ENCODE measurements at regions of chr19 and their contacts with region 1.

Region 1: DNA sequence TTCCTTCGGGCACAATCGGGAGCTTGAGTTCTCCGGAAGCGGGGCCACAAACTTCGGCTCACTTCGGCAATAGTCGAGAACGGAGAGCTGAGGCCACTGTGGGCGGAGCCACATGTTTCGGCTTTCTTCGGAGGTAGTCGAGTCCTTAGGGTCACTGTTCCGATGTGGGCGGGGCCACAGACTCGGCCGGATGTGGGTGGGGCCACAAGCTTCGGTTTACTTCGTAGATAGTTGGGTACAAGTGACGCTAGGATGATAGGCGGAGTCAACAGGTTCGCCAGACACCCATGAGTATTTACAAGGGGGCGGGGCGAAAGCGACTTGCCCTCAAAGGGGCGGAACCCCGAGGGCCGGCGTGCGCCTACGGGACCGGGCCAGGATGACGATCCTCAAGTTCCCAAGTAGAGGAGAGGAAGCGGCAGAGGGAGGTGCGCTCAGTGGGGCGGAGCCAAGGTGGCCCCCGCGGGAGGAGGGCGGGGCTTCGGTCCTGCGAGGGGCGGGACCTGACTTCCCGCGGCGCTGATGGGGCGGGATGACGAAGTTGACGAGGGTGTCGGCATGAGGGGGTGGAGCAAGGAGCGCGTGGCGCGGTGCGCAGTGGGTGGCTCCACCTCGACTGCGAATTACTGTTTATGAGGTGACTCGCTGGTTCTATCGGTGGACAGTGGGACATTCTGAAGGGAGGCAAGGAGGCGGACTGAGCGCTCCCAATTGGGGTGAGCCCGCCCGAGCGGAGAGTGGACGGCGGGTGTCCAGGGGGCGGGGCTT is 539 bp upstream of the MBOAT7 start:
- DNase-seq: peak; percentile 100
- H3K4me3 Mint-ChIP-seq: peak overlapping the region; percentile 94
- H3K27ac Mint-ChIP-seq: peak overlapping the region; percentile 100
- H3K4me1 Mint-ChIP-seq: peaks cover 31% of the 10 kb centered on the region
- H3K27me3 Mint-ChIP-seq: no peaks in the 10 kb centered on the region

Region 2: GRCh38 chr19:54102421-54103169 is 87.3 kb before region 1 on chr19 and contains the start of gene NDUFA3:
- intact Hi-C with region 1: loop called (anchors 1 kb)
- DNase-seq: peak; percentile 98
- H3K4me3 Mint-ChIP-seq: peak within 1 kb of the TSS; percentile 99
- H3K27ac Mint-ChIP-seq: peak within 1 kb of the TSS; percentile 87
- H3K4me1 Mint-ChIP-seq: peaks cover 17% of the 10 kb centered on the region
- H3K27me3 Mint-ChIP-seq: no peaks in the 10 kb centered on the region
- total RNA-seq, gene NDUFA3: 110 and 125 TPM in 2 replicates

Region 3: GRCh38 chr19:54159352-54160181 is 30.4 kb before region 1 on chr19 and contains the start of gene LENG1:
- intact Hi-C with region 1: loop called (anchors 1 kb)
- DNase-seq: peak; percentile 99
- H3K4me3 Mint-ChIP-seq: peak within 1 kb of the TSS; percentile 95
- H3K27ac Mint-ChIP-seq: peak within 1 kb of the TSS; percentile 99
- H3K4me1 Mint-ChIP-seq: peaks cover 56% of the 10 kb centered on the region
- H3K27me3 Mint-ChIP-seq: peaks cover 4% of the 10 kb centered on the region
- total RNA-seq, gene LENG1: 5.8 and 6.6 TPM in 2 replicates

Region 4: DNA sequence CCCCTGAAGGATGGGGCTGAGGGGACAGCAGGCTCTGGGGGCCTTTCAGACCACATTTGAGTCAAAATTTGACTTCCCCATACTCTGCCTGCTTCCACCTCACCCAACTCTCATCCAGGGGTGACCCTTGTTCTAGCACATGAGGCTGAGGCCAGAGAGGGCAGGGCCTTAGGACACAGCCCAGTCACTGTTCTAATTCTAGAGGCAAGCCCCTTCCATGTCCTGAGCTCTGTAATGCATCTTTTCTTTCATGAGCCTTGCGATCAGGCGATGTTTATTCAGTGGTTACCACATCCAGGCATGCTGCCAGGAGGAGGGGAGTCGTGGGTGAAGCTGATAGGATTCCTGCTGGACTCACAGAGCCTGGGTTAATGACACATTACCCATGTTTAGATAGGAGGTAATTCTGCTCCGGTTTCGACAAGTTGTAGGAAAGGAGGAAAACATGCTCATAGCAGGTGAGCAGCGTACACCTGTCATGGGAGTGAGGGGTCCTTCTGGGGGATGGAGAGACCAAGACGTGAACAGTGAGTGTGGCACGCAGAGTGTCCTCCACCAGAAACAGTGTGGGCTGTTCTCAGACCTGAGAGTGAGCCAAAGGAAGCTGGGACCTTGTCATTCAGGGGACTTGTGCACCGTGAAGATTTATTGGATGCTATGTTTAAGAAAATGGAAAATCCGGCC is 20.0 kb after region 1 on chr19:
- intact Hi-C with region 1: loop called (anchors 1 kb)
- DNase-seq: no peak
- H3K4me3 Mint-ChIP-seq: peak overlapping the region; percentile 3
- H3K27ac Mint-ChIP-seq: peak overlapping the region; percentile 79
- H3K4me1 Mint-ChIP-seq: peaks cover 61% of the 10 kb centered on the region
- H3K27me3 Mint-ChIP-seq: no peaks in the 10 kb centered on the region

Region 5: GRCh38 chr19:54463531-54464043 is 273.7 kb after region 1 on chr19 and contains the start of gene LENG9:
- intact Hi-C with region 1: loop called (anchors 1 kb)
- DNase-seq: peak; percentile 96
- H3K4me3 Mint-ChIP-seq: peak within 1 kb of the TSS; percentile 84
- H3K27ac Mint-ChIP-seq: peak within 1 kb of the TSS; percentile 89
- H3K4me1 Mint-ChIP-seq: peaks cover 25% of the 10 kb centered on the region
- H3K27me3 Mint-ChIP-seq: peaks cover 21% of the 10 kb centered on the region
- total RNA-seq, gene LENG9: 8.4 and 11.5 TPM in 2 replicates

Region 6: DNA sequence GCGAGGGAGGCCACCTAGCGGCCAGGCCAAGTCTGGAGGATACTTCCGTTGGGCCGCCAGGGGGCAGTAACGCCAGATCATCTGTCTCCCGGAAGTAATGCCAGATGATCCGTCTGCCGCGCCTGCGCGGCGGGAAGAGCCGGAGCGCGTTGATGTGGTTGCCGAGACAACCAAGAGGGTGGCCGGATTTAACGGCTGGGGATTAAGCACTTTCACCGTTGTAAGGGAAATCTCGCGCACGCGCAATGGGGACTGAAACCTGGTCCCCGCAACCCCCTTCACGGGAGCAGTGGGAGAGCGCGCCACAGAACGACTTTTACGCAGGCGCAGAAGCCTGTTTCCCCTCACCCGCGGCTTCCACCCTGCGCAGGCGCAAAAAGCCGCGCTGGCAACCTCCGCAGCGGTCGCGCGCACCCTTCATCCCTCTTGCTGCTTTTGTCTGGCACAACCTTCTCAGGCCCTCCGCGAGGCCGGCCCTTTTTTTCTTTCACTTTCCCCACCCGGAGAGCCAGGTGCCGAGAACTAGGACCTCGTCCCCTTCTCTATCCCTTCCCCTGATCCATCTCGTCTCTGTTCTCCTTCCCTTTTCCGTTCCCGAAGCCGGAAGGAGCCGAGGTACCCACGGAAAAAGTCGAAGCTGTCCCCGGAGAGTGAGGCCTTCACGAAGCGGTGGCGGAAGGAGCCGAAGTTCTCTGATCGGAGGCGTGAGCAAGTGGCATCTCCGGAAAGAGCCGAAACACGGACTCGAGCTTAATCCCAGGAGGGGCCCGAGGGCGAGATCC is 1464.0 kb after region 1 on chr19:
- intact Hi-C with region 1: loop called (anchors 1 kb)
- DNase-seq: peak; percentile 99
- H3K4me3 Mint-ChIP-seq: peak overlapping the region; percentile 93
- H3K27ac Mint-ChIP-seq: peak overlapping the region; percentile 99
- H3K4me1 Mint-ChIP-seq: peaks cover 43% of the 10 kb centered on the region
- H3K27me3 Mint-ChIP-seq: no peaks in the 10 kb centered on the region

Measured in activated T-helper 1 cell treated with anti-CD3 and anti-CD28 coated beads, Interleukin-12 subunit alpha, Interleukin-12 subunit beta, Interleukin-2, Interleukin-4 antibody, amounts not matched to agents 30 ng/mL and 10 ng/mL and 1 ng/mL, durations not matched to agents 14 hours and 24 hours and 36 hours (primary cell).